HEK293 (cell line): ENCODE measurements at regions of chr7 and their contacts with region 1.

Region 1: DNA sequence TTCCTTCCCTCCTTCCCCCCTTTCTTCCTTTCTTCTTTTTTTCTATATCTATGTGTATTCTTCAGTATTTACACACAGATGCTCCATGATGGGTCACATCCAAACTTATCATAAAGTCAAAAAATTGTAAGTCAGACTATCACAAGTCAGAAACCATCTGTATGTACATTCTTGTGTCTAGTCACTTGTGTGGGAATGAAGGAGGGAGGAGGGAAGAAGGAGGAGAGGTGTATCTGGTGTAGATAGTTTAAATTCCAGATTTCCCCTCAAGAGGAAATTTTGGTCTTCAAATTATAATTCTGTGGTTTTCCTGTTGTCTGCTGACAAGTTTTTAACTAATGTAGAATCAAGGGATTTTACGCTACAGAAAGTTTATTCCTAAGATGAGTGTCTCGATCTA is 287.2 kb downstream of the ETV1 start:
- H3K4me3 ChIP-seq: no peak overlapping the region
- H3K27ac ChIP-seq: no peak overlapping the region
- H3K4me1 ChIP-seq: no peaks in the 10 kb centered on the region
- CTCF ChIP-seq: no peak

Region 2: DNA sequence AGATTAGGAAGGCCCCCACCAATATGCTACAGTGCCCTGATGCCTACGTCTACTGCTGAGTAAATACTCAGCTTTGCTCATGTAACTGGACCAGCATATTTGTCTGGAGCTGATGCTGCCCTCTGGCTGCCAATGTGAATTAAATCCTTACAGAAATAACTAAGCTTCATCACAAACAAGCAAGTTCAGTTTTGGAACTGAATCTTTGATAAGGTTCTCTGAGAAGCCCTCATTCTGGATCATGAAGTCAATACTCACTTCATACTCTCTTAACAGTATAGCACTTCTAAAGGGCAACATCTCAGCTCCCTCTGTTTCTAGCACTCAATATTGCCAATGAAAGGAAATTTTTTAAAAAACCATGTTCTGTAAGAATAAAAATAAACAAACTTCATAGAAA is 40.6 kb after region 1 on chr7:
- CTCF ChIA-PET with region 1: interaction called, 11 read pairs
- POLR2A ChIA-PET with region 1: no interaction called
- H3K4me3 ChIP-seq: no peak overlapping the region
- H3K27ac ChIP-seq: no peak overlapping the region
- H3K4me1 ChIP-seq: no peaks in the 10 kb centered on the region
- CTCF ChIP-seq: no peak